Right cardiac atrium (tissue), 5 donors: ENCODE measurements at regions of chr18 and their contacts with region 1.

Region 1: DNA sequence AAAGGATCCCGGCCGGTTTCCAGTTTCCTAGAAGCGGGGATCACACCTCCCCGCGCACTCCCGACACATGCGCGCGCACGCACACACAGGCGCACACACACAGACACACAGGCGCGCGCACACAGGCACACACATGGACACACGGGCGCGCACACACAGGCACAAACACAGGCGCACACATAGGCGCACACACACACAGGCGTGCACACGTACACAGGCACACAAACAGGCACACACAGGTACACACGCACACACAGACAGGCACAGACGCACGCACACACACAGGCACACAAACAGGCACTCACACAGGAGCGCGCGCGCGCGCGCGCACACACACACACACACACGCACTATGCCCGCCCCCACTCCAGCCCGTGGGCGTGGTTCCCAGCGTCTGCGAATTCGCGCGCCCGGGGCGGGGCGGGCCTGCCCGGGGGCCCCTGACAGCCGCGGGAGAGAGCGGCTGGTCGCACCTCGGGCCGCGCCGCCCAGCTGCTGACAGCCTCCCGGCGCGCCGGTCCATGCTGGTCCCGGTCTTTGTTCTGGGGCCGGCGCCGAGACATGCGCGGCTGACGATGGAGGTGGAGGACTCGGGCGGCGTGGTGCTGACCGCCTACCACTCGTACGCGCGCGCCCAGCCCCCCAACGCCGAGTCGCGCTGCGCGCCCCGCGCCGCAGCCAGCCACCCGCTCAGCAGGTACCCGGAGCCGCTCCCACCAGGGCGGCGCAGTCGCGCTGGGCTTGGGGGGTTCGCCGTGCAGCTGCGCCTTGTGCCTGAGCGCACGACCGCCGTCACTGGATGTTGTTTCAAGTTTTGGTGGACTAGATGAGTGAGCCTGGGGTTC is at the start of gene ARHGAP28:
- DNase-seq: peak; percentile 88 to 97 (median 96)
- ATAC-seq: peak; percentile 97 to 98
- H3K4me3 ChIP-seq: peak within 1 kb of the TSS; percentile 66
- H3K27ac ChIP-seq: peak within 1 kb of the TSS; percentile 91
- H3K4me1 ChIP-seq: no peaks in the 10 kb centered on the region
- H3K27me3 ChIP-seq: no peaks in the 10 kb centered on the region
- total RNA-seq, gene ARHGAP28: 3.2 to 6.1 (median 4.0) TPM

Region 2: DNA sequence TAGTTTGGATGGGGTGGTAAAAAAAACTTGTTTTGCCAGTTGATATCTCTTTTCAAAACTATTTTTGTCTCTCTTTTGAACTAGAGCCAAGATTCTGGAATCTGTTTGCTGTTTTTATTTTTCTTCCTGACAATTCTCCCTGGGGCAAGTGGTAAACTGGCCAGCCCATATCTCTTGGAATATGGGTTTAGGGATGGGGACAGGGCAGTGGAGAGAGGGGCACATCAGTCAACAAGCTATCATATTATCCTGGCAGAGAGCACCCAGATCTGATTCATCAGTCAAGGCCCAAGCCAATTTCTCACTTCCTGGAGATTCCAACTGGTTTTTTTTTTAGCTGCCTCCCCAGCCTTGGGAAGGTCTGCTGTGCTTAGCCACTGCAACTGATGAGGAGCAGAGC is 52.3 kb after region 1 on chr18:
- intact Hi-C with region 1: loop called in 1 of 4 experiments (anchors 5 kb)
- DNase-seq: no peak
- ATAC-seq: peak; percentile 75 to 84
- H3K4me3 ChIP-seq: no peak overlapping the region
- H3K27ac ChIP-seq: peak overlapping the region; percentile 20
- H3K4me1 ChIP-seq: peaks cover 10% of the 10 kb centered on the region
- H3K27me3 ChIP-seq: no peaks in the 10 kb centered on the region

Region 3: DNA sequence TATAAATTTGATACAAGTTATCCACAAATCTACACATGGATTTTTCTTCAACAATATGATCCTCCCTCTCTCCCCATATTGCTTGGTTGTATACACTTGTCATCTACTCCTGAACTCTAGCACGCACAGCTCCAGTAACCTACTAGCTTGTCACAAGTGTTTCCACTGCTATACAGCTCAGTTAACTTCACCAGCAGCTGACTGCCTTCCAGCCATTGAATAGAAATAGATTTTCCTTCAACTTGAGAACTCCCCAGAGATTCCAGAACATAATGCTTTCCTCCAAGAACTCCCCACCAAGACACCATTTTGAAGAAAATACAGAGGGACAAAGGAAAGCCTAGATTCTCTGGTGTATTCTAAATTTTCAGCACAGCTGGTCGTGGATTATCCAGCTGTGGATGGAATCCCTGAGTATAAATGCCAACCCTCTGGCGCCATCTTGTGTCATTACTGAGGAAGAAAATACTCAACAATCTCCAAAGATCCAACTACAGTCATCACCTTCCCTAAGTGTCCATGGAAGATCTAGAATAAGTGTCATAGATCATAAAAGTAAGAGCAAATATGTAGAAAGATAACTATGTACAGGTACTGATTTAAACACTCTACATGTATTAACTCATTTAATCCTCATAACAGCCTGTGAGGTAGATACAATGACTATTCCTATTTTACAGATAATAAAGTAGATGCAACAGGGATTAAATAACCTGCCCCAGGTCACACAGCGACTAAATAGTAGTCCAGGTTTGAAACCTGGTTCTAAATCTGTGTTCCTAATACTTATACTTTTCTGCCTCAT is 156.7 kb after region 1 on chr18:
- intact Hi-C with region 1: loop called in 1 of 4 experiments (anchors 10 kb)
- DNase-seq: peak in 2 of 3 donors; percentile 26 to 39
- ATAC-seq: peak; percentile 66 to 86
- H3K4me3 ChIP-seq: no peak overlapping the region
- H3K27ac ChIP-seq: no peak overlapping the region
- H3K4me1 ChIP-seq: no peaks in the 10 kb centered on the region
- H3K27me3 ChIP-seq: no peaks in the 10 kb centered on the region